Endothelial cell of umbilical vein (primary cell): ENCODE measurements at regions of chr7 and their contacts with region 1.

Region 1: DNA sequence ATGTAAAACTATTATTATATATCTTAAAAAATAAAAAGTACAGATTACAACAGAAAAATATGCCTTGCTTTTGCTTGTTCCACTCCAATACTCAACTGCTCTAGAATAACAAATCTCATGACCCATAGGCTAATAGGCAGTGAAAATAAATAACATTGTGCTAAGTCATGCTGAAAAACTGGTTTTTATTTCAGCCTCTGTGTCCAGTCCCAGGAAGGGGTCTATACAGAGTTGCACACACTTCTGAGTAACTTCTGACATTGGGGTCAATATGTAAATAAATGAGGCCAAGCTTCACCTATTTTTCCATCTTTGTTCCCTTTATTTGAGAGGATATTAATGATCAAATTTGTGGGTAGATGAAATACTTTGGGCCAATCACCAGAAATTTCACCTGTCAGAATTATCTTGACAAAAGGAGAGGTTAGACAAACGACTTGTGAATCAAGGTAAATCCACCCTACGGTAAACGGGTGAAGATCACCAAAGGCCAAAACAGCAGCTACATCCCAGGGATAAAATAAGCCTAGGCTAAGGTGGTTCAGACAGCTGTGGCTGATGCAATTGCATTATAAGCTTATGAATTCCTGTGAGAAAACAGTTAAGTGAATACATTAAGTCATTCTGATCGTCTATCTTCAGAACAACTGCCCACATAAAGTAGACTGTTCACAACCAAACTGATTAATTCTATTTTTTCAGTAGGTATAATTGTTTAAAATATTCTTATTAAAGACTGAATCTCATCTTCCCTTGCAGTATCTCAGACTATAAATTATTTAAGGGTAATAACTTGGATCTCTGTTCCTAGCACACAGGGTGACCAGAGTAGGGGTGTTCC is 87.4 kb downstream of the UBE2H start:
- DNase-seq: no peak
- H3K4me3 ChIP-seq: no peak overlapping the region
- H3K27ac ChIP-seq: no peak overlapping the region
- H3K4me1 ChIP-seq: no peaks in the 10 kb centered on the region
- H3K27me3 ChIP-seq: no peaks in the 10 kb centered on the region
- CTCF ChIP-seq: no peak
- POLR2A ChIP-seq: no peak

Region 2: DNA sequence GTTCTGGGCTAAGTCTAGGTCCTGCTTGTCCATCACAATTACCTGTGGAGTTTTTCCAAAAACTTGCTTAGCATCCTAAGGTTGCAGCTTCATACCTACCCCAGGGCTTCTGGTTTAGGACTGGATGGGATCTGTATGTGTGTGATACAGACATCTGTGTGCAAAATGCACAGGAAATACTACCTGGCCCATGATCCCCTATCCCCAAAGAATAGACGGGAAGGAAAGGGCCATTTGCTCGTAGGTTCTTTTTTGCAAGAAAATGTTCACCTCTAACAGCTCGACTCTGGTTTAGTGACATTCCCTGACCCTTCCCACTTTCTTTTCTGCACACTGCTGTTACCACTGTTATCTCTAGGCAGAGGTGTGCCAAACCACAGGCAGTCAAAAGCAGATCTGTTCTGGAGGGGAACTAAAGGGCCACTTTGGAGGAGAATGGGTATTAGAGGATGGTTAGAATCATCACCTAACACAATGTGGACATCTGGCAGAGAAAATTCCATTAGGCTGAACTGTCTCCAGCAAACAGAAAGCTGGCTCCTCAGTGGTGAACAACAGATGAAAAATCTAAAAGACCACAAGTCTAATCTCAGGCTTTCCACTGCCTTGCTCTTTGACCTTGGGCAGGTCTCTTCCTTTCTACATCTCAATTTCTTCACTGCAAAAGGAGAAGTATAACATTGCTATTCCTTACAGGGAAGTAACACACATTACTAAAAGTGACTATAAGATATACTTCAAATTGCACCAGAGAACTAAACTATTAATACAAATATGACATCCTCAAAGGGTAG is 19.9 kb before region 1 on chr7:
- CTCF ChIA-PET with region 1: no interaction called
- POLR2A ChIA-PET with region 1: no interaction called
- dilution Hi-C with region 1: no loop called
- intact Hi-C with region 1: no loop called
- DNase-seq: no peak
- H3K4me3 ChIP-seq: no peak overlapping the region
- H3K27ac ChIP-seq: peak overlapping the region; percentile 66
- H3K4me1 ChIP-seq: peaks cover 47% of the 10 kb centered on the region
- H3K27me3 ChIP-seq: no peaks in the 10 kb centered on the region
- CTCF ChIP-seq: no peak
- POLR2A ChIP-seq: no peak

Region 3: DNA sequence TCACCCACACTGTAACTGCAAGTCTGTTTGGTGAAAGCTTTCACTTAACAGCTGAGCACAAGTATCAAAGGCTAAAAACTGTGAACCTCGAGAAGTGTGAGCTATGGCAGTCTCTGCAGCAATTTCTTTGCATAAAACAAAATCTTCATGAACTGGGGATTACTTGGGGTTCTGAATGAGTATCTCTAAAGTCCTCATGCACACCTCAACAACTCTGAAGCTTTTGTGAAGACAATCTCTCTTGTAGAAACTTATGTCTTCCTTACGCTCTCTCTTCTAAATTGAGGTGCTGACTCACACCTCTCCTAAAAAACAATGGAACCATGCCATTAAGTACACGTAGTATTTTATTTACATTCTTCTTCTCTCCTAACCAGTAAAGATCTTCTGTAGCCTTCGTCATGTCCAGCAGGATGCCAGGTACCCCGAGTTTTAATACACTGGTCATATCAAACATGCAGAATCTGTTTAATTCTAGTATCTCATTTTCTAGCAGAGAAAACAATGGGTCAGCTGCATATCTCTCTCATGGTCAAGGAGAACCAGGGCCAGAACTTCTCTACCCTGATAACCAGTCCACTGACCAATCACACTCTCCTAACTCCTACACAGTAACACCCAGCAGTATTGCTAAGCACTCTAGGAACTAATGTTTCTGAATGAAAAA is 10.6 kb after region 1 on chr7:
- CTCF ChIA-PET with region 1: interaction called, 10 read pairs
- POLR2A ChIA-PET with region 1: no interaction called
- dilution Hi-C with region 1: no loop called
- intact Hi-C with region 1: no loop called
- DNase-seq: peak; percentile 27
- H3K4me3 ChIP-seq: peak overlapping the region in 1 of 3 experiments; percentile 27
- H3K27ac ChIP-seq: peak overlapping the region; percentile 38
- H3K4me1 ChIP-seq: peaks cover 23% of the 10 kb centered on the region
- H3K27me3 ChIP-seq: no peaks in the 10 kb centered on the region
- CTCF ChIP-seq: no peak
- POLR2A ChIP-seq: no peak